CD8-positive, alpha-beta T cell (primary cell): ENCODE measurements at regions of chr1 and their contacts with region 1.

Region 1: GRCh38 chr1:160731990-160732389 is 7.1 kb upstream of the SLAMF7 start:
- DNase-seq: no peak
- ATAC-seq: no peak
- H3K4me3 ChIP-seq: no peak overlapping the region
- H3K4me3 Mint-ChIP-seq: no peak overlapping the region
- H3K27ac ChIP-seq: no peak overlapping the region
- H3K27ac Mint-ChIP-seq: no peak overlapping the region
- H3K4me1 ChIP-seq: peaks cover 15% of the 10 kb centered on the region
- H3K4me1 Mint-ChIP-seq: peaks cover 31% of the 10 kb centered on the region
- H3K27me3 ChIP-seq: no peaks in the 10 kb centered on the region
- H3K27me3 Mint-ChIP-seq: no peaks in the 10 kb centered on the region
- CTCF ChIP-seq: no peak

Region 2: DNA sequence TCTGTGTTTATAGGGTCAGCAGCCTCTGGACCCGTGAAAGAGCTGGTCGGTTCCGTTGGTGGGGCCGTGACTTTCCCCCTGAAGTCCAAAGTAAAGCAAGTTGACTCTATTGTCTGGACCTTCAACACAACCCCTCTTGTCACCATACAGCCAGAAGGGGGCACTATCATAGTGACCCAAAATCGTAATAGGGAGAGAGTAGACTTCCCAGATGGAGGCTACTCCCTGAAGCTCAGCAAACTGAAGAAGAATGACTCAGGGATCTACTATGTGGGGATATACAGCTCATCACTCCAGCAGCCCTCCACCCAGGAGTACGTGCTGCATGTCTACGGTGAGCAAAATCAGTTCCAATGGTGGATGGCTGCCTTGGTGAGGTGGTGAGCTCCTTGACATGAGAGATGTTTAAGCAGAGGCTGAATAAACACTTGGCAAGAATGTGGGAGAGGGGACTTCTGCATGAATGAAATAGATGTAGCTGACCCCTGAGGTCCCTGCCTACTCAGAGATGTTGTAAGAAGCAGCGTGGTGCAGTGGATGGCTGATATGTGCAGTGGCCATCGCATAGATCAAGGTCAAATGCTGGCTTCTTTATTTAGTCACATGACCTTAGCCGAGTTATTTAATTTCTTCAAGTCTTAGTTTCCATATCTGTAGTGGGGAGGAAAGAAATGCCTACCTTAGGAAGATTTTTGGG is 16.3 kb after region 1 on chr1:
- CTCF ChIA-PET with region 1: interaction called, 13 read pairs
- POLR2A ChIA-PET with region 1: interaction called, 7 read pairs
- intact Hi-C with region 1: loop called (anchors 2 kb)
- DNase-seq: no peak
- ATAC-seq: no peak
- H3K4me3 ChIP-seq: no peak overlapping the region
- H3K4me3 Mint-ChIP-seq: no peak overlapping the region
- H3K27ac ChIP-seq: peak overlapping the region in 1 of 2 experiments; percentile 38
- H3K27ac Mint-ChIP-seq: peak overlapping the region; percentile 24
- H3K4me1 ChIP-seq: peaks cover 72% of the 10 kb centered on the region
- H3K4me1 Mint-ChIP-seq: peaks cover 86% of the 10 kb centered on the region
- H3K27me3 ChIP-seq: no peaks in the 10 kb centered on the region
- H3K27me3 Mint-ChIP-seq: no peaks in the 10 kb centered on the region
- CTCF ChIP-seq: no peak

Region 3: GRCh38 chr1:160810486-160810885 is 78.5 kb after region 1 on chr1:
- CTCF ChIA-PET with region 1: no interaction called
- POLR2A ChIA-PET with region 1: no interaction called
- intact Hi-C with region 1: no loop called
- DNase-seq: no peak
- ATAC-seq: no peak
- H3K4me3 ChIP-seq: no peak overlapping the region
- H3K4me3 Mint-ChIP-seq: no peak overlapping the region
- H3K27ac ChIP-seq: no peak overlapping the region
- H3K27ac Mint-ChIP-seq: peak overlapping the region; percentile 71
- H3K4me1 ChIP-seq: peaks cover 32% of the 10 kb centered on the region
- H3K4me1 Mint-ChIP-seq: peaks cover 75% of the 10 kb centered on the region
- H3K27me3 ChIP-seq: no peaks in the 10 kb centered on the region
- H3K27me3 Mint-ChIP-seq: no peaks in the 10 kb centered on the region
- CTCF ChIP-seq: no peak